ENCODE measurements at regions of chr12 and their contacts with region 1.

Region 1: DNA sequence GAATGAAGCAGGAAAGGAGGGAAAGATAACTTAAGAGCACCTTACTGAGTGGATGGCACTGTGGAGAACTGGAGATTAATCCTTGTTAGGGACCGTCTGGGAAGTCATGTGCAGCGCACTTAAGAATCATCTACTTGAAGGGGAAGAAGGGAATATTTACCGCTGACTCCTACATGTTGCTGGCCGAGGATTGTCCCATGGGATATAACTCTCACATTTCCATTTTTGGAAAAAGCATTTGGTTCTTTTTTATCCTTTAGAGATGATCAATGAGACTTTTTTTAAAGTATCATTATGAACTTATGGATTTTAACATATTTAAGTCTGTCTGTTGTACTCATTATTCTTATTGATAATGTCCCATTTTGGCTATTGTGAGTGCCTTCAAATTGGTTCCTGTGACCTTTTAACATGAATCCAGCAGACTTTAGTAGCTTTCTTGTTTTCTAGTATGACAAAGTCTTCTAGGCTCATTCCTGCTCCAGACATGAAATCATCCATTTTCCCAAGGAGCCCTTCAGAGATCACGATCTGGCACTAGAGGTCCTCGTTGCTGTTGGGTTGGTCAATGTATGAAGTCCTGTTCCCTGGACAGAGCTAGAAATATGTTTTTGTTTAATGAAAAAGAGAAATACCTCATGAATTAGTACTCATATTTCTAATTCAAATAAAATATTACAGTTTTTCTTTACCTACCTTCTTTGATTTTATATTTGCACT is 20.2 kb upstream of the FAM234B start:
- DNase-seq: peak in 1 of 2 donors; percentile 73
- H3K4me3 ChIP-seq: no peak overlapping the region
- H3K27ac ChIP-seq: no peak overlapping the region
- H3K4me1 ChIP-seq: peaks cover 0 to 2% of the 10 kb centered on the region in 2 donors
- H3K27me3 ChIP-seq: no peaks in the 10 kb centered on the region
- CTCF ChIP-seq: peak in 2 of 3 experiments; percentile 39 to 43

Region 2: DNA sequence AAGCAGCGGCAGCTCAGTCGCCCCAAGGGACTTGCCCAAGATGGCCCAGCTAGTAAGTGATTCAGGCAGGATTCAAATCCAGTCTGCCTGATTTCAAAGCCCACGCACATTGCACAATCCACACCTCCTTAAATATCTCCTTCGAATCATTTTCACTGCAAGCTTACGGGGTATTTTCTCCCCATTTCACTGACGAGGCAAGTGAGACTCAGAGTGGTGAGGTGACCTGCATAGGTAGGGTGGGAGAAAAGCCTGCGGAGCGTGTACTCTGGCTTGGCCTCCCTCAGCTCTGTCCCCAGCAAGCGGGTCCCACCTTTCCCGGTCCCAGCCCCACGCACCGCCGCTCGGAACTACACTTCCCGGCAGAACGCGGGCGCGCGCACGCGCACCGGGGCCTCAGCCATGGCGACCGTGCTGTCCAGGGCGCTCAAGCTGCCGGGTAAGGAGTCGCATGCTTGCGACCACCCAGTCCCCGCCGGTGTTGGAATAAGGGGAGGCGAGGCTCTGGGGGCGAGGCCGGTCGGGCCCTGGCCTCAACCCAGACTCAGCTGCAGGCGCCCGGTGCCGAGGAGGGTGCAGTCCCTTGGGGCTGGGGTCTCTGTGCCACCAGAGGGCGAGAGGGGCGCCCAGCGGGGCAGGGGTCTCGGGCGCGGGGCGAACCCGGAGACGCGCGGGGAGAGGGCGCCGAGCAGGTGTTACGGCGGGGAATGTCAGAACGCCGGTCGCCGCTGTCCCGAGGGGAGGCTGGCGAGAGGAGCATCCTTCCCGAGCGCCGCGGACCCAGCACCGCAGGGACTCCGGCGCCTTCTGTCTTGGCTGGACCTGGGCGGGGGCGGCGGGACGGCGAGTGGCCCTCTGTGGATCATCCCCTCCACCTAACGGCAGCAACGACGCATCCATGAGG is 20.3 kb after region 1 on chr12 and contains the start of gene FAM234B:
- intact Hi-C with region 1: loop called (anchors 2 kb)
- DNase-seq: peak; percentile 14 to 91
- H3K4me3 ChIP-seq: peak within 1 kb of the TSS; percentile 90 to 97
- H3K27ac ChIP-seq: peak within 1 kb of the TSS; percentile 61 to 63
- H3K4me1 ChIP-seq: peaks cover 0 to 6% of the 10 kb centered on the region in 2 donors
- H3K27me3 ChIP-seq: no peaks in the 10 kb centered on the region
- CTCF ChIP-seq: peak in 2 of 3 experiments; percentile 10 to 35
- total RNA-seq, gene FAM234B: 6.7 TPM

Region 3: GRCh38 chr12:13211859-13212664 is 188.1 kb after region 1 on chr12:
- intact Hi-C with region 1: loop called (anchors 1 kb)
- DNase-seq: peak in 1 of 2 donors; percentile 84
- H3K4me3 ChIP-seq: no peak overlapping the region
- H3K27ac ChIP-seq: no peak overlapping the region
- H3K4me1 ChIP-seq: peaks cover 0 to 10% of the 10 kb centered on the region in 2 donors
- H3K27me3 ChIP-seq: no peaks in the 10 kb centered on the region
- CTCF ChIP-seq: peak; percentile 71 to 86 (median 78)

Measured in ascending aorta (tissue), 2 donors.